ENCODE measurements at regions of chr10 and their contacts with region 1.

Region 1: GRCh38 chr10:62244780-62245467 is 23.7 kb downstream of the RTKN2 start:
- DNase-seq: peak; percentile 83
- H3K4me3 Mint-ChIP-seq: peak overlapping the region; percentile 79
- H3K27ac Mint-ChIP-seq: no peak overlapping the region
- H3K4me1 Mint-ChIP-seq: peaks cover 20% of the 10 kb centered on the region
- H3K27me3 Mint-ChIP-seq: no peaks in the 10 kb centered on the region
- CTCF ChIP-seq: peak; percentile 53

Region 2: GRCh38 chr10:61140765-61141392 is 1104.0 kb before region 1 on chr10:
- CTCF ChIA-PET with region 1: interaction called, 3 read pairs
- POLR2A ChIA-PET with region 1: no interaction called
- intact Hi-C with region 1: loop called (anchors 5 kb)
- DNase-seq: peak; percentile 70
- H3K4me3 Mint-ChIP-seq: no peak overlapping the region
- H3K27ac Mint-ChIP-seq: no peak overlapping the region
- H3K4me1 Mint-ChIP-seq: peaks cover 11% of the 10 kb centered on the region
- H3K27me3 Mint-ChIP-seq: no peaks in the 10 kb centered on the region
- CTCF ChIP-seq: peak; percentile 62

Region 3: GRCh38 chr10:61896854-61897661 is 347.9 kb before region 1 on chr10:
- CTCF ChIA-PET with region 1: interaction called, 15 read pairs
- POLR2A ChIA-PET with region 1: interaction called, 105 read pairs
- intact Hi-C with region 1: loop called (anchors 1 kb)
- DNase-seq: peak; percentile 80
- H3K4me3 Mint-ChIP-seq: peak overlapping the region; percentile 50
- H3K27ac Mint-ChIP-seq: no peak overlapping the region
- H3K4me1 Mint-ChIP-seq: peaks cover 33% of the 10 kb centered on the region
- H3K27me3 Mint-ChIP-seq: no peaks in the 10 kb centered on the region
- CTCF ChIP-seq: peak; percentile 50

Region 4: DNA sequence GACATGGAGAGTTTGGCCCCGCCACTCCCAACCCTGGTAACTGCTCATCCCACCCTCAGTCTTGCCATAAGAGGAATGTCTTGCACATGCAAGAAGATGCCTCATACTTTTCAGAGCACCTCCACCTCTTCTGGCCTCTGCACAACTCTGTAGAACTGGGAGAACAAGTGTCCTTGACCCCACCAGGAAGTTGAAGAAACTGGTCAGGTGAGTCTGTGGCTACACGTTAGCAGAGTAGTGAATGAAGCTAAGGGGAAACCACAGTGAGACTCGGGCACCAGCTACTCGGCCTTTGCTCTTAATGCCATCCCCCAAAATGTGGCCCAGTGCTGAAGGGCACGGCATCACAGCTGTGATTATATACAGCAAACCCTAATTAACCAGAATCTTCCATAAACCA is 233.4 kb before region 1 on chr10:
- CTCF ChIA-PET with region 1: no interaction called
- POLR2A ChIA-PET with region 1: no interaction called
- intact Hi-C with region 1: no loop called
- DNase-seq: no peak
- H3K4me3 Mint-ChIP-seq: no peak overlapping the region
- H3K27ac Mint-ChIP-seq: no peak overlapping the region
- H3K4me1 Mint-ChIP-seq: no peaks in the 10 kb centered on the region
- H3K27me3 Mint-ChIP-seq: no peaks in the 10 kb centered on the region
- CTCF ChIP-seq: no peak

Region 5: GRCh38 chr10:62038609-62039190 is 206.2 kb before region 1 on chr10:
- CTCF ChIA-PET with region 1: interaction called, 174 read pairs
- POLR2A ChIA-PET with region 1: interaction called, 81 read pairs
- intact Hi-C with region 1: loop called (anchors 1 kb)
- DNase-seq: peak; percentile 78
- H3K4me3 Mint-ChIP-seq: peak overlapping the region; percentile 30
- H3K27ac Mint-ChIP-seq: peak overlapping the region; percentile 52
- H3K4me1 Mint-ChIP-seq: peaks cover 41% of the 10 kb centered on the region
- H3K27me3 Mint-ChIP-seq: no peaks in the 10 kb centered on the region
- CTCF ChIP-seq: peak; percentile 76

Region 6: GRCh38 chr10:62095181-62096071 is 149.5 kb before region 1 on chr10:
- CTCF ChIA-PET with region 1: interaction called, 5 read pairs
- POLR2A ChIA-PET with region 1: interaction called, 4 read pairs
- intact Hi-C with region 1: loop called (anchors 5 kb)
- DNase-seq: peak; percentile 81
- H3K4me3 Mint-ChIP-seq: peak overlapping the region; percentile 58
- H3K27ac Mint-ChIP-seq: peak overlapping the region; percentile 98
- H3K4me1 Mint-ChIP-seq: peaks cover 57% of the 10 kb centered on the region
- H3K27me3 Mint-ChIP-seq: no peaks in the 10 kb centered on the region
- CTCF ChIP-seq: no peak

Region 7: GRCh38 chr10:62278441-62278910 is 33.6 kb after region 1 on chr10:
- CTCF ChIA-PET with region 1: no interaction called
- POLR2A ChIA-PET with region 1: no interaction called
- intact Hi-C with region 1: no loop called
- DNase-seq: no peak
- H3K4me3 Mint-ChIP-seq: no peak overlapping the region
- H3K27ac Mint-ChIP-seq: no peak overlapping the region
- H3K4me1 Mint-ChIP-seq: peaks cover 5% of the 10 kb centered on the region
- H3K27me3 Mint-ChIP-seq: no peaks in the 10 kb centered on the region
- CTCF ChIP-seq: no peak

Region 8: DNA sequence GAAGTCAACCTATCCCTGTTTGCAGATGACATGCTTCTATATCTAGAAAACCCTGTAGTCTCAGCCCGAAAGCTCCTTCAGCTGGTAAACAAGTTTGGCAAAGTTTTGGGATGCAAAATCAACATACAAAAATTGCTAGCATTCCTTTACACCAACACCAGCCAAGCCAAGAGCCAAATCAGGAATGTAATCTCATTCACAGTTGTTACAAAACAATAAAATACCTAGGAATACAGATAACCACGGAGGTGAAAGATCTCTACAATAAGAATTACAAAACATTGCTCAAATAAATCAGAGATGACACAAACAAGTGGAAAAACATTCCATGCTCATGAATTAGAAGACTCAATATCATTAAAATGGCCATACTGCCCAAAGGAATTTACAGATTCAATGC is 78.8 kb after region 1 on chr10:
- CTCF ChIA-PET with region 1: no interaction called
- POLR2A ChIA-PET with region 1: no interaction called
- intact Hi-C with region 1: no loop called
- DNase-seq: no peak
- H3K4me3 Mint-ChIP-seq: no peak overlapping the region
- H3K27ac Mint-ChIP-seq: no peak overlapping the region
- H3K4me1 Mint-ChIP-seq: no peaks in the 10 kb centered on the region
- H3K27me3 Mint-ChIP-seq: no peaks in the 10 kb centered on the region
- CTCF ChIP-seq: no peak

Region 9: GRCh38 chr10:62666275-62666674 is 421.4 kb after region 1 on chr10:
- CTCF ChIA-PET with region 1: no interaction called
- POLR2A ChIA-PET with region 1: no interaction called
- intact Hi-C with region 1: no loop called
- DNase-seq: no peak
- H3K4me3 Mint-ChIP-seq: no peak overlapping the region
- H3K27ac Mint-ChIP-seq: no peak overlapping the region
- H3K4me1 Mint-ChIP-seq: no peaks in the 10 kb centered on the region
- H3K27me3 Mint-ChIP-seq: peaks cover 15% of the 10 kb centered on the region
- CTCF ChIP-seq: no peak

Region 10: GRCh38 chr10:63157845-63158624 is 913.1 kb after region 1 on chr10:
- CTCF ChIA-PET with region 1: interaction called, 7 read pairs
- POLR2A ChIA-PET with region 1: no interaction called
- intact Hi-C with region 1: loop called (anchors 10 kb)
- DNase-seq: peak; percentile 89
- H3K4me3 Mint-ChIP-seq: no peak overlapping the region
- H3K27ac Mint-ChIP-seq: no peak overlapping the region
- H3K4me1 Mint-ChIP-seq: no peaks in the 10 kb centered on the region
- H3K27me3 Mint-ChIP-seq: no peaks in the 10 kb centered on the region
- CTCF ChIP-seq: peak; percentile 67

Measured in MCF 10A (cell line).